ENCODE measurements at regions of chr2 and their contacts with region 1.

Region 1: GRCh38 chr2:157874997-157875640 is 1.0 kb downstream of the ACVR1 start:
- DNase-seq: peak in 1 of 3 donors; percentile 18
- H3K4me3 ChIP-seq: peak overlapping the region; percentile 53 to 98 (median 74)
- H3K4me3 Mint-ChIP-seq: peak overlapping the region; percentile 90 to 91
- H3K27ac ChIP-seq: peak overlapping the region in 1 of 2 donors; percentile 67
- H3K27ac Mint-ChIP-seq: peak overlapping the region; percentile 64 to 93 (median 85)
- H3K4me1 ChIP-seq: peaks cover 16 to 22% of the 10 kb centered on the region in 2 donors
- H3K4me1 Mint-ChIP-seq: peaks cover 31% of the 10 kb centered on the region
- H3K27me3 ChIP-seq: no peaks in the 10 kb centered on the region
- H3K27me3 Mint-ChIP-seq: peaks cover 0 to 11% (median 2%) of the 10 kb centered on the region in 3 donors
- CTCF ChIP-seq: no peak

Region 2: GRCh38 chr2:157838442-157839161 is 36.5 kb before region 1 on chr2:
- intact Hi-C with region 1: loop called in 1 of 2 experiments (anchors 5 kb)
- DNase-seq: peak; percentile 74 to 86 (median 85)
- H3K4me3 ChIP-seq: peak overlapping the region; percentile 42 to 92 (median 72)
- H3K4me3 Mint-ChIP-seq: peak overlapping the region; percentile 67 to 84
- H3K27ac ChIP-seq: peak overlapping the region; percentile 26 to 86
- H3K27ac Mint-ChIP-seq: peak overlapping the region; percentile 82 to 95 (median 89)
- H3K4me1 ChIP-seq: peaks cover 19 to 31% of the 10 kb centered on the region in 2 donors
- H3K4me1 Mint-ChIP-seq: peaks cover 32% of the 10 kb centered on the region
- H3K27me3 ChIP-seq: no peaks in the 10 kb centered on the region
- H3K27me3 Mint-ChIP-seq: no peaks in the 10 kb centered on the region
- CTCF ChIP-seq: no peak